ENCODE measurements at regions of chr18 and their contacts with region 1.

Region 1: GRCh38 chr18:6885992-6886796 is 156.7 kb downstream of the ARHGAP28 start:
- DNase-seq: no peak
- H3K4me3 Mint-ChIP-seq: no peak overlapping the region
- H3K27ac Mint-ChIP-seq: no peak overlapping the region
- H3K4me1 Mint-ChIP-seq: no peaks in the 10 kb centered on the region
- H3K27me3 Mint-ChIP-seq: no peaks in the 10 kb centered on the region

Region 2: GRCh38 chr18:5073026-5073944 is 1812.9 kb before region 1 on chr18:
- intact Hi-C with region 1: loop called (anchors 10 kb)
- DNase-seq: no peak
- H3K4me3 Mint-ChIP-seq: no peak overlapping the region
- H3K27ac Mint-ChIP-seq: no peak overlapping the region
- H3K4me1 Mint-ChIP-seq: no peaks in the 10 kb centered on the region
- H3K27me3 Mint-ChIP-seq: peaks cover 2% of the 10 kb centered on the region

Region 3: DNA sequence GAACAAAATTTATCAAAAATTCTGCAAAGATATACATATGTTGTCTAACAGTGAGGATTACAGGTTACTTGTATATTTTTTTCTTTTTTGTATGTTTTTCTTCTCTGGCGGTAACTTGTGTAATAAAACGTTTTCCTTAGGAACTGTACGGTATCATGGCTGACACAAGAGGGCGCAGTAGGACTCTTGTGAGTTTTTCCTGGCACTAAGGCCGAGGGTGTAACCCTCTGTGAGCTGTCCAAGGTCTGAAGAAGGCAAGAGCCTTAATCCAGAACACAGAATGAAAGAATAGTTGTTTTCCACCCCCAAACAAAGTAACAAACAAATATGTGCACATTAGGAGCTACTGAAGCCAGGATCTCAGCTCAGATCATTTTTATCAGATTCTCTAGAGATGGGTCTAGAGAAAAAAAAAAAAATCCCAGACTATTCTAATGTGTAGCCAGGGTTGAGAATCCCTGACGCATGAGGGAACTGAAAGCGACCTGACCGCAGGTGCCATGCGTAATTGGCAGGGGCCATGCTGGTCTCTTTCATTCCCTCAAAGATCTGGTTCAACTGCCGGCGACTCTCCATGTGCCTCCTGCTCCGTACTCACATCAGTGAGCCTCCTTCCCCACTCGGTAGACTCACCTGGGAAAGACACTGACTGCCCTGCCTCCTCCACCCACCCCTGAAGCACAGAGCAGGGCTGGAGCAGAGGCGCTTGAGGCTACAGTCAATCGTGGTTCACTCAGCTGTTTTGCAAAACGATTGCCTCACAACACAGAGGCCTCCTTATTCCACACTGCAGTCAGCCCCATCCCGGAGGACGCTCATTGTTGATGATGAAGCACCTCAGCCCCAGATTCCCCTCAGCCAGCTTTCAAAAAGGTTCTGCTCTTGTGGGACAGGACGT is 1017.7 kb before region 1 on chr18:
- intact Hi-C with region 1: loop called (anchors 5 kb)
- DNase-seq: peak; percentile 33
- H3K4me3 Mint-ChIP-seq: no peak overlapping the region
- H3K27ac Mint-ChIP-seq: no peak overlapping the region
- H3K4me1 Mint-ChIP-seq: no peaks in the 10 kb centered on the region
- H3K27me3 Mint-ChIP-seq: no peaks in the 10 kb centered on the region

Region 4: GRCh38 chr18:6543330-6543908 is 342.8 kb before region 1 on chr18:
- intact Hi-C with region 1: loop called (anchors 2 kb)
- DNase-seq: no peak
- H3K4me3 Mint-ChIP-seq: no peak overlapping the region
- H3K27ac Mint-ChIP-seq: no peak overlapping the region
- H3K4me1 Mint-ChIP-seq: no peaks in the 10 kb centered on the region
- H3K27me3 Mint-ChIP-seq: no peaks in the 10 kb centered on the region

Measured in activated T-helper 2 cell treated with anti-CD3 and anti-CD28 coated beads, Interferon-gamma antibody, Interleukin-2, Interleukin-4, amounts not matched to agents 10 μg/mL and 5 μg/mL and 100 μg/mL, durations not matched to agents 14 hours and 24 hours and 36 hours (primary cell).